ENCODE measurements at regions of chr20 and their contacts with region 1.

Region 1: DNA sequence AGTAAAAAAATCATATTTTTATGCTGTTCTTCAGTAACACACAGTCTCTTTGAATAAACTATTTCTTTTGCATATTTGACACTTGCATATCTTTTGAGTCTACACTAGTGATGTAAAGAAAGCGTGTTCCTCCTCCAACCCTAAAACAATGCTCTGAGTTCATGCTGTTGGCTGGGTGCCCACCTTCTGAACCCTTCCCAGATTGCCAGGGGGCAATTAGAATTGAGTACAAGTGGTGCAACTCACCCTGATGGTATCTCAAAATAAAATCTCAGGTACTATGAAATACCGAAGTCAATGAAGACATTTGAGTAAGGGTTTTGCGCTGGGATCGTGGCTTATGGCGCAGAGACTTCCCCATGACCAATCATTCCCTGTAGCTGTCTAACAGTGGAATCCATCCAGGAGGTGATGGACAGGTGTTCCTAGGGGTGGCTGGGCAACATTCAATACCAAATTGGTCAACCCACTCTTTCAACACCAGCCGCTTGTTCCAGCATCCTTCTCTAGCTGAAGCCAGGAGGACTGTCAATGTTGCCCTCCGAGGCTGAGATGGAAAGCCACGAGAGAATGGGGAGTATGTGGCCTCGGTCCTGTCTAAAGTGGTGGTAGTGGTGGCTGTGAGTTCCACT is 94.4 kb upstream of the ZNFX1 start:
- DNase-seq: no peak
- ATAC-seq: no peak
- H3K4me3 ChIP-seq: no peak overlapping the region
- H3K27ac ChIP-seq: peak overlapping the region; percentile 13; the same call in 1 of the 2 replicates
- H3K4me1 ChIP-seq: peaks cover 6% of the 10 kb centered on the region; the same call in 1 of the 2 replicates
- H3K27me3 ChIP-seq: no peaks in the 10 kb centered on the region
- CTCF ChIP-seq: no peak

Region 2: DNA sequence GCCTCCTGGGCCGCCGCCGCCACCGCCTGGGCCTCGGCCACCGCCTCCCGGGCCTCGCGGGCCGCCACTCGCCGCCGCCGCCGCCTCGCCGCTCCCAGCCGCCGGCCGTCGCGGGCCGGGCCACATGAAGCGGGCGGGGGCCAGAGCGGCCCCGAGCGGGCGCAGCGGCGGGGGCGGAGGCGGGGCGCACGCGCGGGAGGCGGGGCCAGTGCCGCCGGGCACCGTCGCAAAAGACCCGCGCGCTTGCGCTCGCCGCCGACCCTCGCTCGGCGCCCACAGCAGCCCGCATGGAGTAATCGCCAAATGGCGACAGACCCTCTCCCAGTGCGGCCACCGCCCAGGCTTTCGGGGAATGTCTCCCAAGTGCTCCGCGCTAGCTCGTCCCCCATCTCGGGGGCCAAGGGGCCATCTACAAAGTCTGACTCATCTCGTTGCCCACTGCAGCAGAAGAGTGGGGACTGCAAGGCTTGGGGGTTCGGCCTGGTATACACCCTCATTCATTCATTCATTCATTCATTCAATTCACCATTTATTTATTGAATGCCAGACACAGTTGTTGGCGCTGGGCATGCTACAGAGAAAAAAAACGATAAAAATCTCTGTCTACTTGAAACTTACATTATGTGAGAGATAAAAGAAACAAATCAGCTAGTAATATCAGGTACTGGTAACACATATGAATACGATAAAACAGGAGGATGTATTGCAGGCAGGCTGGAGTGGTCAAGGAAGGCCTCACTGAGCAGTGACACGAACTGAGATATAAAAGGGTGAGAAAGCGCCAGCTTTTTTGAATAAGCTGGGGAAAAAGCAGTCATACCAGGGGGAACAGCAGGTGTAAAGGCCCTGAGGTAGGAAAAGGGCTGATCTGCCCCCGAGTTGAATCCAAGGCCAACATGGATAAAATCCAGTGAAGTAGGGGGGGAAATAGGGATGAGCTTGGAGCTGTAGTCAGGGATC is 341.8 kb after region 1 on chr20 and contains the start of gene B4GALT5:
- CTCF ChIA-PET with region 1: no interaction called
- POLR2A ChIA-PET with region 1: no interaction called
- in situ Hi-C with region 1: no loop called
- intact Hi-C with region 1: no loop called
- DNase-seq: peak; percentile 33
- ATAC-seq: peak; percentile 92
- H3K4me3 ChIP-seq: peak within 1 kb of the TSS; percentile 75 to 79
- H3K27ac ChIP-seq: peak within 1 kb of the TSS; percentile 82
- H3K4me1 ChIP-seq: peaks cover 26% of the 10 kb centered on the region
- H3K27me3 ChIP-seq: no peaks in the 10 kb centered on the region
- CTCF ChIP-seq: no peak
- total RNA-seq, gene B4GALT5: 40.0 TPM

Region 3: GRCh38 chr20:49768204-49769047 is 396.2 kb after region 1 on chr20:
- CTCF ChIA-PET with region 1: no interaction called
- POLR2A ChIA-PET with region 1: interaction called, 10 read pairs
- in situ Hi-C with region 1: no loop called
- intact Hi-C with region 1: no loop called
- DNase-seq: no peak
- ATAC-seq: no peak
- H3K4me3 ChIP-seq: no peak overlapping the region
- H3K27ac ChIP-seq: peak overlapping the region; percentile 8; the same call in 1 of the 2 replicates
- H3K4me1 ChIP-seq: peaks cover 7% of the 10 kb centered on the region
- H3K27me3 ChIP-seq: no peaks in the 10 kb centered on the region
- CTCF ChIP-seq: no peak

Measured in Panc1 (cell line).